Thyroid gland (tissue), 4 donors: ENCODE measurements at regions of chr7 and their contacts with region 1.

Region 1: DNA sequence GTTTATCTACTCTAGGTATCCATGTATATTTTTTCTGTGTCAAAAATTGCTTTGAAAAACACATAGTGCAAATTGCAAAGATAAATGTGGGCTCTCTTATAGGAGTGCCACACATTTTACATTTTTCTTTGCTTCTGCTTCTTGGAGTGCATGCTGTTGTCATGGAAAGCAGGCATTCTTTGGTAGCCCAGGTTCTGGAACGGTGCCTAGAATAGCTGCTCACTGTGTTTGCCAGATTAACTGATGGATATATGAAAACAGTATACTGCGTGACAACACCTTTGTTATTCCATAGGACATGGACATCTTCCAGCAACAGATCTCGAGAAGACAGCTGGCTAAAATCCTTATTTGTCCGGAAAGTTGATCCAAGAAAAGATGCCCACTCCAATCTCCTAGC is 13.4 kb downstream of the NIPSNAP2 start:
- DNase-seq: peak; percentile 47 to 52
- H3K4me3 ChIP-seq: no peak overlapping the region
- H3K27ac ChIP-seq: peak overlapping the region in 1 of 3 donors; percentile 2
- H3K4me1 ChIP-seq: peaks cover 10 to 15% of the 10 kb centered on the region in 2 donors
- H3K27me3 ChIP-seq: no peaks in the 10 kb centered on the region
- CTCF ChIP-seq: no peak
- POLR2A ChIP-seq: no peak

Region 2: DNA sequence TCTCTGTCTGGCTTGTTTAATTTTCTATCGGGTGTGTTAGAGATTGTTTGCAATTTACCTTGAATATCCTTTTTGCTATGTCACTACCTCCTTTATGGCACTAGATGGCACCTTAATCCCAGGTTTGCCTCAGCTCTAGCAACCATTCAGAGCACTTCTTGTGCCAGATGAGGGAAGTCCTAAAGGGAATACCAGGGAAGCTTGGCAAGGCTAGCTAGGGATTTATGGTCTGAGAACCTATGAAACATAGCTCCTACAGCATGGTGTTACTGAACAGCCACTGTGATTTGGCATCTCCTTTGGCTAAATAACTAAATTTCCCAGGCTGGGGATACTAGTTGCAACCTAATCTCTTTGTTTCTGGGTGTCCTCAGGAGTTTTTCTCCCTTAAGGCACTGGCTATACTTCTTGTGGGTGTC is 336.5 kb before region 1 on chr7:
- intact Hi-C with region 1: loop called (anchors 10 kb)
- DNase-seq: peak; percentile 23 to 25
- H3K4me3 ChIP-seq: no peak overlapping the region
- H3K27ac ChIP-seq: no peak overlapping the region
- H3K4me1 ChIP-seq: no peaks in the 10 kb centered on the region
- H3K27me3 ChIP-seq: no peaks in the 10 kb centered on the region
- CTCF ChIP-seq: peak in 5 of 6 experiments; percentile 34 to 94 (median 80)
- POLR2A ChIP-seq: no peak

Region 3: DNA sequence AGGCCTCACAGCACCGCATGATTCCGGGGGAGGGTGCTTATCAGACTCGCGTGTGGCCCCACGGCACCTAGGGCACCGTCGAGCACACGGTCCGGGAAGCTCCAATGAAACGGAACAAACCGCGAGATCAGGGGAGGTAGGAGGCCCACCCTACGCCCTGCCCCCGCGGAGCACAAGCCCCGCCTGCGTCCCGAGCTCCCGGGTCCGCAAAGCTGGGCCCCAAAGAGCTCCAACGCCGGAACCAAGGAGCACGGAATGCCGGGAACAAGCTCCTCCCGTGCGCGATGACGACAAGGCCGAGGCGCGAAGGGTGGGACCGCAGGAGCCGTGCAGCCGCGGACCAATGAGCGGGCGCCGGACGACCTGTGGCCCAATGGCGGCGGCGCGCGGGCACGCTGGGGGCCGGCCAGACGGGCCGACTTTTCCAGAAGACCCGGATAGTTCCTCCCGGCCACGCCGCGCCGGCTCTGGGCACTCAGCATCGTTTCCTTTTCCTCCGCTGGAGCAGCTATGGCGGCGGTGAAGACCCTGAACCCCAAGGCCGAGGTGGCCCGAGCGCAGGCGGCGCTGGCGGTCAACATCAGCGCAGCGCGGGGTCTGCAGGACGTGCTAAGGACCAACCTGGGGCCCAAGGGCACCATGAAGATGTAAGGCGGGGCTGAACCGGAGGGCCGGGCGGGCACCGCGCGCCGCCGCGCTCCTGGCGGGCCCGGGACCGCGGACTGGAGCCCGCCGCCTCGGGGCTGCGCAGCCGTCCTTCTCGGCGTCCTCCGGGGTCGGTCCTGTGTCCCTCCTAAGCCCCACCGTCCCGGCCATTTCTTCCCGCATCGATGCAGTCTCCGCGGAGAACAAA is 73.7 kb after region 1 on chr7 and contains the starts of genes CCT6A and PSPH:
- intact Hi-C with region 1: loop called (anchors 10 kb)
- DNase-seq: peak; percentile 99
- H3K4me3 ChIP-seq: peak within 1 kb of the TSS; percentile 86 to 98 (median 95)
- H3K27ac ChIP-seq: peak within 1 kb of the TSS; percentile 85 to 94 (median 89)
- H3K4me1 ChIP-seq: peaks cover 17 to 32% of the 10 kb centered on the region in 2 donors
- H3K27me3 ChIP-seq: no peaks in the 10 kb centered on the region
- CTCF ChIP-seq: no peak
- POLR2A ChIP-seq: peak; percentile 39 to 83
- total RNA-seq, gene CCT6A: 88.7 to 147 (median 118) TPM
- total RNA-seq, gene PSPH: 19.3 to 26.7 (median 23.3) TPM

Region 4: GRCh38 chr7:56375173-56375572 is 397.3 kb after region 1 on chr7:
- intact Hi-C with region 1: no loop called
- DNase-seq: no peak
- H3K4me3 ChIP-seq: no peak overlapping the region
- H3K27ac ChIP-seq: no peak overlapping the region
- H3K4me1 ChIP-seq: no peaks in the 10 kb centered on the region
- H3K27me3 ChIP-seq: no peaks in the 10 kb centered on the region
- CTCF ChIP-seq: no peak
- POLR2A ChIP-seq: no peak